ENCODE measurements at regions of chr1 and their contacts with region 1.

Region 1: GRCh38 chr1:15680621-15681345 is 3.3 kb upstream of the PLEKHM2 start:
- DNase-seq: peak; percentile 89
- ATAC-seq: no peak
- H3K4me3 ChIP-seq: no peak overlapping the region
- H3K27ac ChIP-seq: peak overlapping the region; percentile 75
- H3K4me1 ChIP-seq: peaks cover 35% of the 10 kb centered on the region
- H3K27me3 ChIP-seq: no peaks in the 10 kb centered on the region
- CTCF ChIP-seq: no peak

Region 2: DNA sequence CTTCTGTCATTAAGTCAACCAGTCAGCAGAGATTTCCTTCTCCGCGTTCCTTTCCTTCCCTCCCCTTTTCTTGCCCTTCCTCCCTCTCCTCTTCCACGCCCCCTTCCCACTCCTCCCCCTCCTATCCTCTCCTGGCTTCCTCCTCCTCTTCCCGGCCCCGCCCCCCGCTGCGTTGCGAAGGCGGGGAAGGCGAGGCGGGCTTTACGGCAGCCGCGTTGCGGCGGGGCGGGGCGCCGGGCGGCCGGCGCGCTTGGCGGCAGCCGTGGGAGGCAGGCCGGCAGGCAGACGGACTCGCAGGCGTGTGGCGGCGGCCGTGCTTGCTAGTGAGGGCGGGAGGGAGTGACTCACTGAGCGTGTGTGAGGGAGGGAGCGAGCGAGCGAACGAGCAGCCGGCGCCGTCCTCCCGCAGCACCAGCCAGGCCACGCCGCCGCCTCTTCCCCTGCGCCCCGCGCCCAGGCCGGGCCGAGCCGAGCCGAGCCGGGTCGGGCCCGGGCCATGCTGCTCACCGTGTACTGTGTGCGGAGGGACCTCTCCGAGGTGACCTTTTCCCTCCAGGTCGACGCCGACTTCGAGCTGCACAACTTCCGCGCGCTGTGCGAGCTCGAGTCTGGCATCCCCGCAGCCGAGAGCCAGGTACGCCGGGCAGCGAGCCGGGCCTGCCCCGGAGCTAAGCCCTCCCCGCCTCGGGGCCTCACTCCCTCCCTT is 63.5 kb before region 1 on chr1 and contains the start of gene DDI2:
- CTCF ChIA-PET with region 1: no interaction called
- POLR2A ChIA-PET with region 1: no interaction called
- intact Hi-C with region 1: no loop called
- DNase-seq: peak; percentile 98
- ATAC-seq: peak; percentile 82
- H3K4me3 ChIP-seq: peak within 1 kb of the TSS; percentile 86
- H3K27ac ChIP-seq: peak within 1 kb of the TSS; percentile 76
- H3K4me1 ChIP-seq: peaks cover 33% of the 10 kb centered on the region
- H3K27me3 ChIP-seq: no peaks in the 10 kb centered on the region
- CTCF ChIP-seq: no peak
- total RNA-seq, gene DDI2: 15.0 and 22.0 TPM in 2 replicates

Region 3: GRCh38 chr1:15668089-15668754 is 12.6 kb before region 1 on chr1:
- CTCF ChIA-PET with region 1: no interaction called
- POLR2A ChIA-PET with region 1: no interaction called
- intact Hi-C with region 1: loop called (anchors 1 kb)
- DNase-seq: peak; percentile 18
- ATAC-seq: no peak
- H3K4me3 ChIP-seq: no peak overlapping the region
- H3K27ac ChIP-seq: no peak overlapping the region
- H3K4me1 ChIP-seq: no peaks in the 10 kb centered on the region
- H3K27me3 ChIP-seq: no peaks in the 10 kb centered on the region
- CTCF ChIP-seq: no peak

Region 4: DNA sequence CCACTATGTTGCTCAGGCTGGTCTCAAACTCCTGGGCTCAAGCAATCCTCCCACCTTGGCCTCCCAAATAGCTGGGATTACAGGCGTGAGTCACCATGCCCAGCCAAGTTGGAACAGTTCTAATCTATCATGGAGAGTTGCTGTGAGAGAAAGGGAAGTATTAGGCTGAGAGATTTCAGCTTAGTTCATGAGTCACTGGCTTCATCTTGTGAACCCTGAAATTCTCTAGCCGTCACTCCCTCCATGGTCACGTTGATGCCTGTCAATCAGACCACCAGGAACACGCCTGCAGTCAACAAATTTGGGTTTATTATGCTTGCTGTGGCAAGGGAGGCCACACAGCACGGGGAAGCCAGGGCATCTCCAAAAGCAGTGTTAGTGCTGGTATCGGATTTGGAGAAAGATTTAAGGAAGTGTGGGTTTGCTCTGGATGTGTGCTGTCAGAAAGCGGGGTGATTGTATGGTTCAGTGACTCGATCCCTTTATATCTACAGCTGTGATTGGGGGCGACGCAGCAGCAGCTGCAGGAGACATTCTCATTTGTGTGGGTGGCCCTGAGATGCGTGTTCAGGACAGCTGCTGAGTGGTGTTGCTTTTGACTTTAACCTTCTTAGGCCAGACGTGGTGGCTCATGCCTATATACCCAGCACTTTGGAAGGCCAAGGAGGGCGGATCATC is 108.0 kb after region 1 on chr1:
- CTCF ChIA-PET with region 1: no interaction called
- POLR2A ChIA-PET with region 1: no interaction called
- intact Hi-C with region 1: no loop called
- DNase-seq: peak; percentile 46
- ATAC-seq: no peak
- H3K4me3 ChIP-seq: no peak overlapping the region
- H3K27ac ChIP-seq: peak overlapping the region; percentile 49; the same call in 1 of the 2 replicates
- H3K4me1 ChIP-seq: peaks cover 30% of the 10 kb centered on the region
- H3K27me3 ChIP-seq: no peaks in the 10 kb centered on the region
- CTCF ChIP-seq: no peak

Region 5: DNA sequence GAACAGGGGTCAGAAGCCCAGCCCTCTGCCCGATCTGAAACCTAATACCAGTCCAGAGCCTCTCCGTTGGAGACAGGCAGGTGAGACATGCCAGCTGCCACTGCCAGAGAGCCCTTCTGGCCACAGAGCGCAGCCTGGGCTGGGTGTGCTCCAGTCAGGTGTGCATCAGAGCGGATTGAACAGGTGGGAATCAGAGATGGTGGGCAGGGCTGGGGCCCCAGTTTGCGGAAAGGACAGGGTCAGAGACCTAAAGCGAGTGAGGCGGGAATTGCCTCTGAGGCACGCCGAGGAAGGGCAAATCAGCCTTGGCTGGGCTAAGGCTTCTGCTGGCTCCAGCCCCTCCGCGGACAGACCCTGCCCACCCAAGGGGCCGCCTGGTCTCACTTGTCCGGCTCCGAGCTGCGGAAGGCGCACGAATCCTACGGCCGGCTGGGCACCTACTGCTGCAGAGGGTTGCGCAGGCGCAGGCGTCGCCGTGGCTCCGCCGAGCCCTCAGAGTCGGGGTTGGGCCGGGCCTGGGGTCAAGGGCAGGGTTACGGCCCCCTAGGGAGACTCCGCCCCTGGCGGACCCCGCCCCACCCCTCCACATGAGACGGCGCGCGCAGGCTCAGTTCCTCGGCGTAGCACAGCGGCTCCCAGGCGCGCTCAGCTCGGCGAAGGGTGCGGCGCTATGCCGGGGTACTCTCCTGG is 545.9 kb after region 1 on chr1:
- CTCF ChIA-PET with region 1: no interaction called
- POLR2A ChIA-PET with region 1: no interaction called
- intact Hi-C with region 1: no loop called
- DNase-seq: no peak
- ATAC-seq: no peak
- H3K4me3 ChIP-seq: no peak overlapping the region
- H3K27ac ChIP-seq: no peak overlapping the region
- H3K4me1 ChIP-seq: no peaks in the 10 kb centered on the region
- H3K27me3 ChIP-seq: no peaks in the 10 kb centered on the region
- CTCF ChIP-seq: no peak